OCI-LY7 (cell line): ENCODE measurements at regions of chr2 and their contacts with region 1.

Region 1: GRCh38 chr2:7037340-7038333 is 120.4 kb downstream of the RNF144A start:
- DNase-seq: peak; percentile 79
- H3K4me3 ChIP-seq: no peak overlapping the region
- H3K27ac ChIP-seq: no peak overlapping the region
- H3K4me1 ChIP-seq: no peaks in the 10 kb centered on the region
- CTCF ChIP-seq: peak; percentile 94

Region 2: GRCh38 chr2:6159606-6160005 is 878.0 kb before region 1 on chr2:
- CTCF ChIA-PET with region 1: no interaction called
- POLR2A ChIA-PET with region 1: no interaction called
- intact Hi-C with region 1: no loop called
- DNase-seq: no peak
- H3K4me3 ChIP-seq: no peak overlapping the region
- H3K27ac ChIP-seq: no peak overlapping the region
- H3K4me1 ChIP-seq: peaks cover 5% of the 10 kb centered on the region
- CTCF ChIP-seq: no peak

Region 3: GRCh38 chr2:6896930-6897759 is 140.5 kb before region 1 on chr2:
- CTCF ChIA-PET with region 1: no interaction called
- POLR2A ChIA-PET with region 1: no interaction called
- intact Hi-C with region 1: loop called (anchors 5 kb)
- DNase-seq: peak; percentile 42
- H3K4me3 ChIP-seq: no peak overlapping the region
- H3K27ac ChIP-seq: no peak overlapping the region
- H3K4me1 ChIP-seq: no peaks in the 10 kb centered on the region
- CTCF ChIP-seq: peak; percentile 90

Region 4: DNA sequence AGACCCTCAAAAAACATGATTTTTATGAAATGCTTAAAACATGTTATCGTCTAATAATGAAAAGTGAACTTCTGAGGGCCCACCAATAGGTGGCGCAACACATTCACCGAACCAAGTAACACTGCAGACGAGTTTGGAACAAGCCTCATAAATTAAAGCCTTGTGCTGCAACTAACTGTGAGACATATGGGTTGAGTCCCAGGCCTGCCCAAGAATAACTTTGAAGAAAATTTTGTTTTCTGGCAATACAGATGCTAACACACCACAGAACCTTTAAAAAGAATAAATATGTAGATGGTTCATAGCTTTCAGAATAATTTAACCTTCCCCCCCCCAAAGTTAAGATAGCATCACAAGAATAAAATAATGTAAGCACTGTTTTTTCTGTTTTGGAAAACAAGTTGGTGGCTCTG is 165.4 kb after region 1 on chr2:
- CTCF ChIA-PET with region 1: no interaction called
- POLR2A ChIA-PET with region 1: no interaction called
- intact Hi-C with region 1: loop called (anchors 5 kb)
- DNase-seq: peak; percentile 67
- H3K4me3 ChIP-seq: no peak overlapping the region
- H3K27ac ChIP-seq: no peak overlapping the region
- H3K4me1 ChIP-seq: no peaks in the 10 kb centered on the region
- CTCF ChIP-seq: peak; percentile 99